Activated CD8-positive, alpha-beta T cell treated with anti-CD3 and anti-CD28 coated beads for 36 hours (primary cell): ENCODE measurements at regions of chr20 and their contacts with region 1.

Region 1: GRCh38 chr20:35303735-35304491 is 11.7 kb upstream of the FAM83C start:
- DNase-seq: peak; percentile 94
- ATAC-seq: peak; percentile 64
- H3K4me3 Mint-ChIP-seq: no peak overlapping the region
- H3K27ac Mint-ChIP-seq: peak overlapping the region; percentile 50
- H3K4me1 Mint-ChIP-seq: peaks cover 54% of the 10 kb centered on the region
- H3K27me3 Mint-ChIP-seq: no peaks in the 10 kb centered on the region
- CTCF ChIP-seq: peak; percentile 91

Region 2: DNA sequence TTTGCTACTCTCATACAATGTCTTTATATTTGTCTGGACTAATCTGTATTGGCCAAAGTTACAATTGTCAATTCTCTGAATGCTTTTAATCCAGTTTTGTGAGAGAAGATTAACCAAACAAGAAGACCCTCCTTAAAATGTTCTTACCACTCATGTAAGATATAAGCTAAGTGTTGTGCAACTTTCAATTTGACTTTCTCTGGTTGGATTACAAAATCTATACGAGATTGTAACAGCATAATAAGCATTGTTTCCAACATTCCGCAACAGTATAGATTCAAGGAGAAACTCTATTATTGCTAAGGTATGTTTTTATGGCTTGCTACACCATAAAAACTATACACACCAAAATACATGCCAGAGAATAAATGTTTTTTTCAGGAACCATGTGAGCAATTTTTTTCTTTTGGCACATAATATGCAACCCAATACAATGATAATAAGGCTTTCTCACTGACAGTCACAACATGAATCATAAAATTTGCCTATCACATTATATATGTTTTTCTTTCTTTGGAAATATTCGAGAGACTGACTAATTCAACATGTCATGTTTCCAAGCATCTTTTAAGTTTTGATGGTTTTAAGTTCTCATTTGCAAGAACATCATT is 199.1 kb before region 1 on chr20:
- CTCF ChIA-PET with region 1: no interaction called
- POLR2A ChIA-PET with region 1: no interaction called
- intact Hi-C with region 1: no loop called
- DNase-seq: no peak
- ATAC-seq: no peak
- H3K4me3 Mint-ChIP-seq: no peak overlapping the region
- H3K27ac Mint-ChIP-seq: no peak overlapping the region
- H3K4me1 Mint-ChIP-seq: no peaks in the 10 kb centered on the region
- H3K27me3 Mint-ChIP-seq: no peaks in the 10 kb centered on the region
- CTCF ChIP-seq: no peak

Region 3: GRCh38 chr20:35146920-35147574 is 156.9 kb before region 1 on chr20 and contains the start of gene EDEM2:
- CTCF ChIA-PET with region 1: interaction called, 11 read pairs
- POLR2A ChIA-PET with region 1: no interaction called
- intact Hi-C with region 1: no loop called
- DNase-seq: peak; percentile 95
- ATAC-seq: peak; percentile 91
- H3K4me3 Mint-ChIP-seq: peak within 1 kb of the TSS; percentile 95
- H3K27ac Mint-ChIP-seq: peak within 1 kb of the TSS; percentile 90
- H3K4me1 Mint-ChIP-seq: peaks cover 27% of the 10 kb centered on the region
- H3K27me3 Mint-ChIP-seq: no peaks in the 10 kb centered on the region
- CTCF ChIP-seq: no peak
- total RNA-seq, gene EDEM2: 14.4 to 16.0 TPM

Region 4: DNA sequence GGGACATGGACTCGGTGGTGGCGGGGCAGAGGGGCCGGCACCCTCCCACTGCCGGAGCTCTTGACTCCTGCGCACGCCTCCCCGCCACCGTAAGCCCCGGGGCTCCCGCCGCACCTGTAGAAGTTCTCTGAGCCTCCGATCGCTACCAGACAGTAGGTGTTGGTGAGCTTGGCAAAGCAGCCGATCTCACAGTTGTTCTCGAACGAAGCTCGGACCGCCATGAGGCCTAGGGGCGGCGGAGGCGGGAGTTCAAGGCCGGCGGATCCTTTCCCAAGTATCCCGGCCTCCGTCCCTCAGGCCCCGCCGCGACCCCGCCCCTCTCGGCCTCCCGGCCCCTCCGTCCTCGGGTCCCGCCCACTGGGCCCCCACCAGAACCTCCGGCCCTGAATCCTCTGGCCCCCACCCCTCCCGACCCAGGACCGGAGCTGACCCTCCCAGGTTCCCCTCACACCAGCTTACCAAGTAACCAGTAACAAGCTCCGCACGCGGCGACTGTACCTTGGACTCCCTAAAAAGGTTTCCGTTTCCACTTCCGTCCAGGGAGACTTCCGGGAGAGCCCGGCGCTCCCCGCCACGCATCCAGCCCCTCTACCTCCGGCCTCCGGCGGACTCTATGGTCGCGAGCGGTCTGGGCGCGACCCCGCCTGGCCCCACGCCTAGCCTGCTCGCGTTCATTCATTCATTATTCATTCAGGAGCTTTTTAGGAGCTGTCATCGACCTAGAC is 19.5 kb before region 1 on chr20 and contains the start of gene EIF6:
- CTCF ChIA-PET with region 1: interaction called, 22 read pairs
- POLR2A ChIA-PET with region 1: interaction called, 7 read pairs
- intact Hi-C with region 1: no loop called
- DNase-seq: peak; percentile 88
- ATAC-seq: peak; percentile 91
- H3K4me3 Mint-ChIP-seq: peak within 1 kb of the TSS; percentile 85
- H3K27ac Mint-ChIP-seq: peak within 1 kb of the TSS; percentile 92
- H3K4me1 Mint-ChIP-seq: peaks cover 30% of the 10 kb centered on the region
- H3K27me3 Mint-ChIP-seq: no peaks in the 10 kb centered on the region
- CTCF ChIP-seq: no peak
- total RNA-seq, gene EIF6: 132 to 144 TPM

Region 5: DNA sequence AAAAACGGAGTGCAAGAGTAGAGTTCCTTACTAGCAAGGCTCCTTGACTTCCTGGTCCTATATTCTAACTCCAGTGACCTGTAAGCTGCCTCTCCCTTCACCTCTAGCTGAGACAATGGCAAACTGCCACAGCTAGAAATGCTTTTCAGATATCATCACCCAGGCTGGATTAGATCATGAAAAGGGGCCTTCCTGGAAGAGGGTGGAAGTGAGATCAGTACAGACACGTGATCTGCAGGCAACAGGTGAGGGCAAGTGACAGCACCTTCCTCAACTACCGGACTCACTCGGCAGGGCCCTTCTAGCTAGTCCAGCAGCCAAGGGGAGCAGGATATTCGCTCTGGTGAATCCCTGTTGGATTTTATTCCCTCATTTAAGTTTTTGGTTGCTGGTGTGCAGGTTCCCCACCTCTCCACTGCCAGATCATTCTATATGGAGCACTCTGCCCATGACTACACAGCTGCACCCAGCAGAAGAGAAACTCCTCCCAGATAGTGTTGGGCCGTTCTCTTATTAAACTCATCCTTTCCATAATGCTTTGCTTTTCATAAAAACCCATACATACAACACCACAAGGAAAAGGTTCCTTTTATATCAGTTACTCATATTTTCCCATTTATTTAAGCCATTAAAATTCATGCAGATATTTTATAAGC is 14.7 kb after region 1 on chr20:
- CTCF ChIA-PET with region 1: interaction called, 22 read pairs
- POLR2A ChIA-PET with region 1: interaction called, 4 read pairs
- intact Hi-C with region 1: no loop called
- DNase-seq: no peak
- ATAC-seq: peak; percentile 50
- H3K4me3 Mint-ChIP-seq: no peak overlapping the region
- H3K27ac Mint-ChIP-seq: no peak overlapping the region
- H3K4me1 Mint-ChIP-seq: peaks cover 39% of the 10 kb centered on the region
- H3K27me3 Mint-ChIP-seq: no peaks in the 10 kb centered on the region
- CTCF ChIP-seq: no peak

Region 6: DNA sequence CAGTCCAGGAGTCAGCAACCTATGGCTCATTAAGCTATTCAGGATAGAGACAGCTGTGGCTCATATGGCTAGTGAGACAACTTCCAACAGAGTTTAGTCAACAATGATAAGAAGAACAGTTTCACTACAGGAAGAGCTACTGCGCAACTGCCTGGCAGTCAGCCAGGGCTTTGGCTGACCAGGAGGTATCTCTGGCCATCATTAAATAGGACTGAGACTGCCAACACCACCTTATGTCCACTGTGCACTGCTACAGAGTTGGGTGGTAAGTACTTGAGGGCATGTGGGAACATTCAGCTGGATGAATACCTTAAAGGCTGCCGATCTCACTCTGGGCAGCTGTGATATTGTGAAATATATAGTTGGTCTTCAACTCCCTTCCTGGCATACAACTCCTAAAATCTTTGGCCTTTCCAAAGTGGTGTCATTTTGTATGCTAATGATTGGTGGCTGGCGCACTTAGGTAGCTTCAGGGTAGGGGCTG is 40.5 kb after region 1 on chr20:
- CTCF ChIA-PET with region 1: interaction called, 14 read pairs
- POLR2A ChIA-PET with region 1: no interaction called
- intact Hi-C with region 1: no loop called
- DNase-seq: no peak
- ATAC-seq: no peak
- H3K4me3 Mint-ChIP-seq: no peak overlapping the region
- H3K27ac Mint-ChIP-seq: no peak overlapping the region
- H3K4me1 Mint-ChIP-seq: no peaks in the 10 kb centered on the region
- H3K27me3 Mint-ChIP-seq: no peaks in the 10 kb centered on the region
- CTCF ChIP-seq: no peak

Region 7: DNA sequence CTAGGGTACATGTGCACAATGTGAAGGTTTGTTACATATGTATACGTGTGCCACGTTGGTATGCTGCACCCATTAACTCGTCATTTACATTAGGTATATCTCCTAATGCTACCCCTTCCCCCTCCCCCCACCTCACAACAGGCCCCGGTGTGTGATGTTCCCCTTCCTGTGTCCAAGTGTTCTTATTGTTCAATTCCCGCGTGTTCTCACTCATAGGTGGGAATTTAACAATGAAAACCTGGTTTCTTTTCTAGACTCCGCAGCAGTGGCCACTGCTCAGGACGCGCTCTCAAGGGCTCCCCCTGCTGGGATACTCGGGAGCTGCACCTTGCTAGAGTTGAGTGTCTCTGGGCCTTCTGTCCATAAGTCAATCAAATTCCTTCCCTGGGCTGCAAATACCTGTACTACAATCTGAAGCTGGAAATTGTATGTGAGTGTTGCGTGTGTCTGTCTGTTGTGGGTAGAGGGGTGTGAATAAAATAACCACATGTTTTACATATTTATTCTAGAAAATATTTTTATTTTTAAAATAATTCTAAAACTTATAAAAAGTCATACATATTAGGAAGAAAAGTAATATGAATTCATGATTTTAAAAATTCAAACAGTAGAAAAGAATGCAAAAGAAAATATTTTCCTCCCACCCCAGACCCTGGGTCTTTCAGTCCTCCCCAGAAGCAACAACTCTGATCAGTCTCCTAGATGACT is 143.3 kb after region 1 on chr20:
- CTCF ChIA-PET with region 1: interaction called, 85 read pairs
- POLR2A ChIA-PET with region 1: interaction called, 3 read pairs
- intact Hi-C with region 1: loop called (anchors 5 kb)
- DNase-seq: peak; percentile 96
- ATAC-seq: peak; percentile 100
- H3K4me3 Mint-ChIP-seq: peak overlapping the region; percentile 85
- H3K27ac Mint-ChIP-seq: peak overlapping the region; percentile 64
- H3K4me1 Mint-ChIP-seq: peaks cover 6% of the 10 kb centered on the region
- H3K27me3 Mint-ChIP-seq: peaks cover 1% of the 10 kb centered on the region
- CTCF ChIP-seq: peak; percentile 90